Left cardiac atrium (tissue), 4 donors: ENCODE measurements at regions of chr14 and their contacts with region 1.

Region 1: DNA sequence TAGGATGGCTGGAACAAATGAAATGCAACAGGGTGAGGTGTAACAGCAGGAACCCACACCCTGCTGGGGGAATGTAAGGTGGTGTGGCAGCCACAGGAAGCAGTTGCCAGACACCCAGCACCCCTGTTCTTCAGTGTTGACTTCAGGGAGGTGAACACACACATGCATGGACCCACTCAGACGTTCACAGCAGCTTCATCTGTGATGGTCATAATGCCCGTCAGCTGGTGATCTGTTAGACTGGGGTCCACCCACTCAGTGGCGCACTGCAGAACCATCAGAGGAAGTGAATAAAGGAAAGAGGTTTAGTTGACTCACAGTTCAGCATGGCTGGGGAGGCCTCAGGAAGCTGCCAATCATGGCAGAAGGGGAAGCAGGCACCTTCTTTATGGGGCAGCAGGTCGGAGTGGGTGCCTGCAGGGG is 22.7 kb upstream of the TEX22 start:
- DNase-seq: no peak
- ATAC-seq: no peak

Region 2: DNA sequence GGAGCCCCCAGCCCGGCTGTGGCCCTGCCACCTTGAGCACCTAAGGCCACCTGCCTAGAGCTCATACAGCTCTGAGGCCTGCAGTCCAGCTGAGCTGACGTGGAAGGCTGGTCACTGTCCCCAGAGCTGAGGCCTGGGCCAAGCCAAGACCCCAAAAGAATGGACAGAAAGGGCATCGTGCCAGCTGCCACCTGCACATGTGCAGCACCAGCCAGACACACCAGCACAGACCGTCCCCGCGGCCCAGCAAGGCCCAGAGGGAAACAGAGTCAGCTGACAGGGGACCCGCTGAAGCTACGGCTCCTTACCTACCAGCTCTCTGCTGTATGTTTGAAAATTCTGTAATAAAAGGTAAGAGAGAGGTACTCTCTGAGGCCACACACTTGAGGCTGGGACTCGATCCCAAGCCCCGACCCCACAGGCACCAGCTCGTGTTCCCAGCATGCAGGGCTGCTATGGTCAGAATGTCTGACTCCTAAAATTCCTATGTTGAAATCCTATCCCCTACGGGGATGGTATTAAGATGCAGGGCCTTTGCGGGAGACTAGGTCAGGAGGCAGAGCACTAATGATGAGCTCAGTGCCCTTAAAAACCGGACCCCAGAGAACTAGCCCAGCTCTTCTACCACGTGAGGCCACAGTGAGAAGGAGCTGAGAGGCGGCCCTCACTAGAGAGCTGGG is 100.2 kb before region 1 on chr14:
- intact Hi-C with region 1: no loop called
- DNase-seq: peak; percentile 38
- ATAC-seq: peak; percentile 38 to 91

Region 3: DNA sequence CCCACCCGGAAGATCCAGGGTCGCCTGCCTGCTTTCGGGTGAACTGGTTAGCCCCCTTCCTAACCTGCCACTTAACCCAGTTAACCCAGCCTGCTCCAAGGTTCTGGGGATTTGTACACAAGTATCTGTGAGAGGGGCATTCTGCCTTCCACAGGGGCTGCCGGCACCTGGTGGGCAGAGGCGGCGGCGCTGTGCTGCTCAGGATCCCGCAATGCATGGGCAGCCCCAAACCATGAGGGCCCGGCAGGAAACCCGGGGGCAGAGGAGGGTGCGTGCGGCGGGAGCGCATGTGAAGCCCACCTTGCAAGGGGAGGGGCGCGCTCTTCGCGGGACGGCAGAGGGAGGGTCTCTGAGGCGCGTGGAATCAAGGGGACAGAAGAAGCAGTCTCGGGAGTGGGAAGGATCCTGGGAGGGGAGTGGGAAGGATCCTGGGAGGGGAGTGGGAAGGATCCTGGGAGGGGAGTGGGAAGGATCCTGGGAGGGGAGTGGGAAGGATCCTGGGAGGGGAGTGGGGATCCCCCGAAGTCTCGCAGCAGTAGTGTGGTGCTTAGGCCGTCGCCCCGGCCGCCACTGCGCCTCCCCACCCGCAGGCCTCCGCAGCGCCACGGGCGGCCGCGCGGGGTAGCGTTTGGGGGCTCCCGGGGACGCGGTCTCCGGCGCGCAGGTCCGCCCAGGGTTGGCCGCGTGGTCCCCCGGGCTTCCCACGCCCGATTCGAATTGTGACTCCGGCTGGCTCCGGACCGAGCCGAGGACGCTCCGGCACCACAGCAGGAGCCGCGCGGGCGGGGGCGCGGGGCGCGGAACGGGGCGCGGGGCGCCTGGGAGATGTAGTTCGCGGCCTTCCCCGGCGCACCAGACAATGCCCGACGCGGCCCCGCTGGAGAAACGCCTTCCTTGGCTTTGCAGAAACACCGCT is 39.1 kb after region 1 on chr14:
- intact Hi-C with region 1: no loop called
- DNase-seq: peak; percentile 87
- ATAC-seq: peak; percentile 82 to 84

Region 4: GRCh38 chr14:105448706-105449111 is 73.1 kb after region 1 on chr14:
- intact Hi-C with region 1: loop called in 1 of 2 experiments (anchors 5 kb)
- DNase-seq: peak; percentile 81
- ATAC-seq: peak; percentile 86 to 90

Region 5: DNA sequence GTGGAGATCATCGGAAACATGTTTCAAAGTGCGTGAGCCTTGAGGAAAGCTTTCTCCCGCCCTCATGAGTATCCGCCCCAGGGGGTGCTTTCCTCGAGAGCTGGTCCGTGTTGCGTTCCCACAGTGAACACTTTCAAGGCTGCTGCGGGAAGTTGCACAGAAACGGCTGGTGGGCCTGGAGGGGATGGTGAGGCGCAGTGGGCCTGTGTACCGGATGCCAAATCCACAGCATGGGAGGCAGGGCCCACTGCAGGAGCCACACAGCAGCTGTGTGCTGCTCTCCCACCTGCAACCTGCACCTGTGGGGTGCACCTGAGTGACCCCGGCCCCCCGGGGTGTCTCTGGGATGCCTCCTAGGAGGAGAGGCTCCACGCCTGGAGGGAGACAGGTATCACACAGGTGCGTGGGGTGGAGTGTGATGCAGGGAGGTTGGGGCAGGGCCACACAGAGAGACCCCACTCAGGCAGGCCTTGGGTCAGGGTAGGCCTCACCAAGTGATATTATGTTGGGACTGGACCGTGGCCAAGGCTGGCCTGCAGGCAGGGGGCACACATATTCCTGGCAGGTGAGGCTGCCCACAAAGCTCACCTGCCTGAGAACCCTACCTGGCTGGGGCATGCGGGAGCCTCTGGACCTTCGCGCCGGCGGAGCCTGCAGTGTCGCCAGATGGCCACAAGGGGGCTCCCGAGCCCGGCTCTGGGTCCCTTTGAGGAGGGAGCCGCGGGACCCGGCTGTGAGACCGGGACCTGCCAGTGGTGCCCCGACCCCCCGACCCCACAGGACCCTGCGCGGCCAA is 161.9 kb after region 1 on chr14:
- intact Hi-C with region 1: loop called in 1 of 2 experiments (anchors 10 kb)
- DNase-seq: peak; percentile 48
- ATAC-seq: peak; percentile 71 to 83

Region 6: GRCh38 chr14:105562713-105563346 is 187.2 kb after region 1 on chr14:
- intact Hi-C with region 1: no loop called
- DNase-seq: no peak
- ATAC-seq: no peak